Activated CD8-positive, alpha-beta T cell treated with anti-CD3 and anti-CD28 coated beads, Interleukin-2, amount 10 ng/mL, durations not matched to agents 7 days and 5 days (primary cell): ENCODE measurements at regions of chr1 and their contacts with region 1.

Region 1: GRCh38 chr1:110209715-110210603 is at the start of gene KCNC4:
- DNase-seq: peak; percentile 96
- ATAC-seq: peak; percentile 92
- H3K4me3 Mint-ChIP-seq: peak within 1 kb of the TSS; percentile 81
- H3K27ac Mint-ChIP-seq: peak within 1 kb of the TSS; percentile 95
- H3K4me1 Mint-ChIP-seq: peaks cover 42% of the 10 kb centered on the region
- H3K27me3 Mint-ChIP-seq: peaks cover 8% of the 10 kb centered on the region
- total RNA-seq, gene KCNC4: 7.5 to 8.3 TPM

Region 2: DNA sequence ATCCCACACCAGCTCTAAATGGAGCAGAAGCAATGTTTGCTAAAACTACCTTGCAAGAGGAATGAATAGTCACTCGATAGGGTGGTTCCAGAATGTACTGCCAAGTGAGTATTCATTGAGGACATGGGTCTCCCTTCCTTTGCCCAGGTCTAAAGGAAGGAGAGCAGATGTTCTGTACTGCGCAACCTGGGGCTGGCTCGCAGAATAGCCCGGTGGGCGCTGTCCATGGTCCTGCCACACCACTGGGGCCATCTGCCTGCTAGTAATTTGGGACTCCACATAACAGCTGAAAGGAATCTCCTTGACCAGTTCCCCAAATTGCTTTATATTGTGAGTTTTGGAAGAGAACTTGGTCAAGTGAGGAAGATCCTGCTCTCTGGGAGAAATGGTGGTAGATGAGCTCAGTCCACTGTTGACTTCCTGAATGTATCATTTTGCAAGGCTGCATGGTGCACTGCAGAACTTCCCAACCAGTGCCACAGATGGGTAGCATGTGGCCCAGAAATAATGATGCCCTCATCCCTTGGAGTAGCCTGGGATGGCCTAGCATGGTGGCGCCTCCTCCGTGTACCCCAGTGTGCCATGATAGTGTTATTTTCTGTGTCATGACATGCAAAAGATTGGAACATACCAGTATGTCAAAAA is 54.0 kb before region 1 on chr1:
- CTCF ChIA-PET with region 1: no interaction called
- POLR2A ChIA-PET with region 1: no interaction called
- DNase-seq: peak; percentile 70
- ATAC-seq: peak; percentile 71
- H3K4me3 Mint-ChIP-seq: no peak overlapping the region
- H3K27ac Mint-ChIP-seq: no peak overlapping the region
- H3K4me1 Mint-ChIP-seq: peaks cover 9% of the 10 kb centered on the region
- H3K27me3 Mint-ChIP-seq: peaks cover 36% of the 10 kb centered on the region

Region 3: GRCh38 chr1:110230381-110231199 is 20.6 kb after region 1 on chr1:
- CTCF ChIA-PET with region 1: interaction called, 10 read pairs
- POLR2A ChIA-PET with region 1: no interaction called
- DNase-seq: no peak
- ATAC-seq: no peak
- H3K4me3 Mint-ChIP-seq: no peak overlapping the region
- H3K27ac Mint-ChIP-seq: peak overlapping the region; percentile 34
- H3K4me1 Mint-ChIP-seq: peaks cover 6% of the 10 kb centered on the region
- H3K27me3 Mint-ChIP-seq: no peaks in the 10 kb centered on the region

Region 4: GRCh38 chr1:110262846-110263631 is 53.1 kb after region 1 on chr1:
- CTCF ChIA-PET with region 1: interaction called, 21 read pairs
- POLR2A ChIA-PET with region 1: no interaction called
- DNase-seq: peak; percentile 36
- ATAC-seq: peak; percentile 69
- H3K4me3 Mint-ChIP-seq: no peak overlapping the region
- H3K27ac Mint-ChIP-seq: no peak overlapping the region
- H3K4me1 Mint-ChIP-seq: no peaks in the 10 kb centered on the region
- H3K27me3 Mint-ChIP-seq: peaks cover 5% of the 10 kb centered on the region

Region 5: DNA sequence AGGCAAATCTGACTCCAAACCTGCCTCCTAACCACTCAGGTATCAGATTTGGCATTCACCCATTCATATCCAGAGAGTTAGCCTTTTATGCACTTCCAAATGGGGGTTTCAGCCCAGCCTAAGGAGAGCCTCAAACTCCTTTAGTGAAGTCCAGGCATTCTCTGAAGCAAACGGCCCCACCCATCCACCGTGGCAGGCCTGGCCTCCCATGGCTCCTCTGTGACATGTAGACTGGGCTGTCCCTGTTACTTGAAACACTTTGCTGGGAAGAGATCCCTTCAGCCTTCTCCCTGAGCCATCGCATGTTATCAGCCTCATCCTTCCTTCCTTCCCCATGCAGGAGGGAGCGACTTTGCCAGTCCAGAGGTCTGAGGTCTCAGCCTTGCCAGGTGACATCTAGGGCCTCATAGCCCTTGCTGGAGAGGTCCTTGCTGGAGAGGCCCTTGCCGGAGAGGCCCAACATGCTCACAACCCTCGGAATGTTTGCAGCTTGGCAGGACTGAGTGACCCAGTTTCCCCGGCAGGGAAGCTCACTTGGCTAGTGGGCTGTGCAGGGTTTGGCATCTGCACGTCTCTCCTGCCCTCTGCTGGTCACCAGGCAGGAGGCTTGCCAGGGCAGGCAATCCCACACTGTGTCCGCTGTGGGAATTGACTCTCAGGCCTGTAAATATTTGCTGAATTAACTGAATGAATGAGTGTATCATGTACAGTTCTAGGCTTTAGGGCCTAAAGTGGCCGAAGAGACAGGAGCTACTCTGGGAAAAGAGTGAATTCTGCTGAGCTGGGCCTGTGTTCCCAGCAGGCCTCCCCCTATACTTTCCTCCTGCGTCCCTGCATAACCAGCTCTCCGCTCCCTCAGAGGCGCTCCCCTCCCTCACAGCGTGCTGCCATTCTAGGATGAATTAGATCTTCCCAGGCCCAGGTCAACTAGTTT is 102.5 kb after region 1 on chr1:
- CTCF ChIA-PET with region 1: interaction called, 460 read pairs
- POLR2A ChIA-PET with region 1: interaction called, 5 read pairs
- DNase-seq: peak; percentile 76
- ATAC-seq: peak; percentile 97
- H3K4me3 Mint-ChIP-seq: no peak overlapping the region
- H3K27ac Mint-ChIP-seq: no peak overlapping the region
- H3K4me1 Mint-ChIP-seq: no peaks in the 10 kb centered on the region
- H3K27me3 Mint-ChIP-seq: no peaks in the 10 kb centered on the region

Region 6: DNA sequence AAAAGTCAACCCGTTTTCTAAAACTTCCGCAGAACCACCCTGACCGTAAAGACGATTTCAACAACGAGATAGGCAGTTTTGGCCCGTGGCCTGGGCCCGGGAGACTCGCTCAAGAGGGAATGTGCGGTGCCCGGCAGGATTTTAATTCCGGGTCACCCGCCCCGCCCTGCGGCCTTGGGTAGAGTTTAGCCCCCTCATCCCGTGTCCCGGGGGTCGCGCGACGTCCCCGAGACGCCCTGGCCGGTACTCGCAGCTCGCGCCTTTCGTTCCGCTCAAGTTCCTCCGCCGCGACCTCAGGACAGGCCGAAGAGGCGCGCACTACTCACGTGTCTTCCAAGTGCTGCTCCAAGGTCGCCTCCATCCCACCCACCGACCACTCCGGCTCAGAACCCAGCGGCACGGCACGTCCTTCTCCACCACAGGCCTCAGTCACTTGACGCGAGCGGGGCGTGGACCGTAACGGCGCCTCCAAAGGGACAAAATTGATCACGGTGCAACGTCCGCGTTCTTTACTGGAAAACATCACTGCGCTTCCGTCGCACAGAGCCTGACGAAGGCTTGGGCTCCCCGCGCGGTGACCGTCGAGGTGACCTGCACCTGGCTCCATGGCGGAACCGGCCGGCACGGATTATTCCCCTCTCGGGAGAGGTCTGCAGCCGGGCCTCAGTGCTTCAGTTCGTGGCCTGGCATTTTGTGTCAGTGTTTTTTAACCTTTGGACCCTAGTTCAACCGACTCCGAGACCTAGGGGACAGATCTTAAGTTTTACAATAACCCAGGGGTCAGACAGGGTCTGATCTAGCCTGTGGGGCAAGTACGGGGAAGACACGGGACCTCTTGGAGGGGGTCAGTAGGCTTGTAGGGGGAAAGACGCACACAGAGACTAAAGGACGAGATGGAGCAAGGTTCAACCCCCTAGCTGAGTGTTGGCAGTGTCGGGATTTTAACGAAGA is 197.6 kb after region 1 on chr1 and contains the start of gene LAMTOR5:
- CTCF ChIA-PET with region 1: interaction called, 25 read pairs
- POLR2A ChIA-PET with region 1: interaction called, 3 read pairs
- DNase-seq: peak; percentile 96
- ATAC-seq: peak; percentile 93
- H3K4me3 Mint-ChIP-seq: peak within 1 kb of the TSS; percentile 100
- H3K27ac Mint-ChIP-seq: peak within 1 kb of the TSS; percentile 100
- H3K4me1 Mint-ChIP-seq: peaks cover 28% of the 10 kb centered on the region
- H3K27me3 Mint-ChIP-seq: no peaks in the 10 kb centered on the region
- total RNA-seq, gene LAMTOR5: 123 TPM